Caco-2 (cell line): ENCODE measurements at regions of chr7 and their contacts with region 1.

Region 1: GRCh38 chr7:148434181-148434757 is 156.3 kb upstream of the C7orf33 start:
- DNase-seq: no peak
- H3K4me3 ChIP-seq: no peak overlapping the region
- H3K4me3 Mint-ChIP-seq: no peak overlapping the region
- H3K27ac Mint-ChIP-seq: no peak overlapping the region
- H3K4me1 ChIP-seq: 0 out of 2 replicates have a peak, but pooled peaks cover under 1% of the 10 kb centered on the region
- H3K4me1 Mint-ChIP-seq: peaks cover 7% of the 10 kb centered on the region
- H3K27me3 ChIP-seq: no peaks in the 10 kb centered on the region
- H3K27me3 Mint-ChIP-seq: no peaks in the 10 kb centered on the region
- CTCF ChIP-seq: no peak

Region 2: DNA sequence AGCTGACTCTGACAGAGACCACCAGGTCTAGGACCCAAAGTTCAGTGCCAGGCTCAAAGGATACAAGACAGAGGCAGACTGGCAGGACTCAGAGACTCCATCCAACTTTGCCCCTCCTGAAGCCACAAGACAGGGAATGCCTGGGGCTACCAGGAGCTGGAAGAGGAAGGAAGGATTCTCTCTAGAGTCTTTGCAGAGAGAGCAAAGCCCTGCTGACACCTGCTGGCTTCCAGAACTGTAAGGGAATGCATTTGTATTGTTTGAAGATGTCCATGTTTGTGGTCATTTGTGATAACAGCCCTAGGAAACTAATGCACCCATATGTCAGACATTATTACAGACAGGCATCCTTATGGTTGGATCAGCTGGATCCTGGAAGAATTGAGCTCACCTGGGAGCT is 24.0 kb after region 1 on chr7:
- CTCF ChIA-PET with region 1: no interaction called
- POLR2A ChIA-PET with region 1: no interaction called
- intact Hi-C with region 1: loop called (anchors 2 kb)
- DNase-seq: peak in 1 of 2 experiments; percentile 9
- H3K4me3 ChIP-seq: no peak overlapping the region
- H3K4me3 Mint-ChIP-seq: no peak overlapping the region
- H3K27ac Mint-ChIP-seq: peak overlapping the region; percentile 40
- H3K4me1 ChIP-seq: peaks cover 18% of the 10 kb centered on the region
- H3K4me1 Mint-ChIP-seq: peaks cover 15% of the 10 kb centered on the region
- H3K27me3 ChIP-seq: no peaks in the 10 kb centered on the region
- H3K27me3 Mint-ChIP-seq: no peaks in the 10 kb centered on the region
- CTCF ChIP-seq: no peak